ENCODE measurements at regions of chr3 and their contacts with region 1.

Region 1: DNA sequence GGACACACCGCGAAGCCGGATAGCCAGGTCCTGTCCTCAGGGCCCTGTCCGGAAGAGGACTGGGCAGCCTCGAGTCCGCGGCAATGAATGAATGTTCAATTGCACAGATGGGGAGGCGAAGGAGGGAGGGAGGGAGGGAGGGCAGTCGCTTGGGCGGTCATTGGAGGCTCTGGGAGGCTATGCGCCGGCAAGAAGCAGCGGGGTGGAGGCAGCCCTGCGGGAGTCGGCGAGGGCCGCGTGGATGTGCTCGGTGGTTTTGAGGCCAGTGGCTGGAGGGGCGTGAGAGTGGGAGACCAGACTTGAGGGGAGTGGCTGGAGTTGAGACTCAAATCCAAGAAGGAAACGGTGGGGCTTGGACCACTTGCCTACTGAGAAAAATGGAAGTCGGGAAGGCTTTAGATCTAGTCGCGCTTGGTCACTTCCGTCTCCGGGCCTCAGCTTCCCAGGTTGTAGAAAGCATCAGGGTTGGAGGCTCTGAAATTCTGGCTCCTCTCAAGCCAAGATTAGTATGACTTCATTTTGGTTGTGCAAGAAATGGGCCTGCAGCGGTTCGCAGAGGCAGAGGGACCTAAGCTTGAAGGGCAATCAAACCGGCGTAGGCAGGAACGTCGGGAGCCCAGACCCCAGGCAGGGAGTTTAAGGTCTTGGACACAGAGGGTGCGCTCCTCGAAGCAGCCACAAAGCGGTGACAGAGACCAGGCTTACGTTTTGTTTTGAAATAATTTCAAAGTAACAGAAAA is 21.1 kb upstream of the PLXND1 start:
- DNase-seq: peak; percentile 48
- ATAC-seq: peak; percentile 65
- H3K4me3 Mint-ChIP-seq: peak overlapping the region; percentile 93
- H3K27ac Mint-ChIP-seq: peak overlapping the region; percentile 76
- H3K4me1 Mint-ChIP-seq: peaks cover 21% of the 10 kb centered on the region
- H3K27me3 Mint-ChIP-seq: no peaks in the 10 kb centered on the region
- CTCF ChIP-seq: no peak

Region 2: DNA sequence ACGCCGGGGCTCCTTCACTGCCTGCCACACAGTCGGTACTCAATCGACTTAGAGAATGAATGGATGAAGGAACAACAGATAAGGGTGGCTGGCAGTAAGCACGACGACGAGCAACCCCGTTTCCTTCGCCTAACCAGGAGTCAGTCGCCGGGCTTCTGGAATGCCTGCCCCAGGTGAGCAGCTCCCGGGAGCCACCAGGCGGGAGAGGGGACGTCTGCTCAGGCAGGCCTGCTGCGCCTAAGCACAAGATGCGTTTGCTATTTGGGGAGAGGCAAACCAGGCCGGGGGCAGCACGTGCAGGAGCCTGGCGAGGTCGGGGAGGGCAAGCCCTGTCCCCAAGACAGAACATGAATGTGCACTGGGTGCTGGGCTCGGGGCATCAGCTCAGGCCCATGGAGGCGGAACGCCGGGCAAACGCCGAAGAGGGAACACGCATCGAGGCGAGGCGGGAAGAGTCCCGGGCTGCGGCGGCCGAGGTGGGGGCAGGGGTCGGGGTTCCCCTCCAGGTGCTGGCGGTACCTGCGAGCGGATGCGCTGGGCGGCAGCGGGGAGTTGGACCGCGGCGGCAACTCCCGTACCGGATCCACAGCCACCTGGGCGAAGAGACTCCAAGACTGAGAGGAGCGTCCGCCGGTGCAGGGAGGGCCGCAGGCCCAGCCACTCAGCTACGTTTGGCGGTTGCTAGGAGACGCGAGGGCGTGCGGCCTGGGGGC is 634.0 kb before region 1 on chr3 and contains the start of gene CFAP92:
- CTCF ChIA-PET with region 1: no interaction called
- POLR2A ChIA-PET with region 1: no interaction called
- intact Hi-C with region 1: no loop called
- DNase-seq: peak; percentile 88
- ATAC-seq: peak; percentile 98
- H3K4me3 Mint-ChIP-seq: peak within 1 kb of the TSS; percentile 60
- H3K27ac Mint-ChIP-seq: peak within 1 kb of the TSS; percentile 41
- H3K4me1 Mint-ChIP-seq: peaks cover 28% of the 10 kb centered on the region
- H3K27me3 Mint-ChIP-seq: peaks cover 15% of the 10 kb centered on the region
- CTCF ChIP-seq: no peak
- total RNA-seq, gene CFAP92: not detected in 2 replicates

Region 3: DNA sequence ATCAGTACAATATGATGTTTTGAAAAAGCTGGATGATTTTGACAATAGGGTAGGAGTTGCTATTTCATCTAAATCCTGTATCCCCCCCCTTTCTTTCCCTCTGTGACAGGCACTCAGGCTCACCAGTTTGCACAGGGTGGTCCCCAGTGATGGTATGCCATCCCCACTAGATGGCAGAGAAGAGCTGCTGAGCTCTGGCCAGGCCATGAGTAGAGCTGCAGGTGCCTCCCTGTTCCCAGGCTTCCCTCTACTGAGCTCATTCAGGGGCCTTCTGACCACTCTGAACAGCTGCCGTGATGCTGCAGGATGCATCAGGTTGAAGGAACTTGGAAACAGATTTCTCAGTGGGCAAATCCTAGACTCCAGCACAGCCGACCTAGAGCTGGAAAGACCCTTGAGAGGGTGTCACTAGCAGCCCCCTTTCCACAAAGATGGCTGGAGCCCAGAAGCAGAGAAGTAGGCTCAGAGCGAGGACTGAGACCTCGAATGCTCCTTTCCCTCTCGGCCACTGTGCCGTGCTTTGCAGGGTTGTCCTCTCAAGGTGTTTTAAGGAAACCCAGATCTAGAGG is 244.2 kb before region 1 on chr3:
- CTCF ChIA-PET with region 1: interaction called, 6 read pairs
- POLR2A ChIA-PET with region 1: interaction called, 5 read pairs
- intact Hi-C with region 1: loop called (anchors 5 kb)
- DNase-seq: peak; percentile 26
- ATAC-seq: peak; percentile 98
- H3K4me3 Mint-ChIP-seq: no peak overlapping the region
- H3K27ac Mint-ChIP-seq: no peak overlapping the region
- H3K4me1 Mint-ChIP-seq: no peaks in the 10 kb centered on the region
- H3K27me3 Mint-ChIP-seq: no peaks in the 10 kb centered on the region
- CTCF ChIP-seq: peak; percentile 23

Region 4: DNA sequence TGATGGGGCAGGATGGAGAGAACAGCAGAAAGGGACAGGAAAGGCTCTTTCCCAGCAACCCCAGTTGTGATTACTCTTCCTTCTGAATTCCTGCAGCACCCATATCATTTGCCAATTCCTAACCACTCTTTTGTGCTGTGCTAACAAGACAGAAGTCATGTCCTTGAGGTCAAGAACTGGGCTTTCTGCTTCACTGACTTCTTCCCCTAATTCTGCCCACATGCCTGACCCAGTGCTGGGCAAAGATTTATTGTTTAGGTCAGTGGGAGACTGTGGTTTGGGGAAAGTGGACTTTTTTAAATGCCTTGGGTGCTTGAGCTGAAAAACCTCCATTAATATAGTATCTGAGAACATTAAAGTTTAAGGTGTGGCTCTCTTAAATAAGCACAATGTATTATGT is 194.9 kb before region 1 on chr3:
- CTCF ChIA-PET with region 1: no interaction called
- POLR2A ChIA-PET with region 1: no interaction called
- intact Hi-C with region 1: no loop called
- DNase-seq: no peak
- ATAC-seq: no peak
- H3K4me3 Mint-ChIP-seq: no peak overlapping the region
- H3K27ac Mint-ChIP-seq: peak overlapping the region; percentile 59
- H3K4me1 Mint-ChIP-seq: peaks cover 73% of the 10 kb centered on the region
- H3K27me3 Mint-ChIP-seq: no peaks in the 10 kb centered on the region
- CTCF ChIP-seq: no peak

Region 5: DNA sequence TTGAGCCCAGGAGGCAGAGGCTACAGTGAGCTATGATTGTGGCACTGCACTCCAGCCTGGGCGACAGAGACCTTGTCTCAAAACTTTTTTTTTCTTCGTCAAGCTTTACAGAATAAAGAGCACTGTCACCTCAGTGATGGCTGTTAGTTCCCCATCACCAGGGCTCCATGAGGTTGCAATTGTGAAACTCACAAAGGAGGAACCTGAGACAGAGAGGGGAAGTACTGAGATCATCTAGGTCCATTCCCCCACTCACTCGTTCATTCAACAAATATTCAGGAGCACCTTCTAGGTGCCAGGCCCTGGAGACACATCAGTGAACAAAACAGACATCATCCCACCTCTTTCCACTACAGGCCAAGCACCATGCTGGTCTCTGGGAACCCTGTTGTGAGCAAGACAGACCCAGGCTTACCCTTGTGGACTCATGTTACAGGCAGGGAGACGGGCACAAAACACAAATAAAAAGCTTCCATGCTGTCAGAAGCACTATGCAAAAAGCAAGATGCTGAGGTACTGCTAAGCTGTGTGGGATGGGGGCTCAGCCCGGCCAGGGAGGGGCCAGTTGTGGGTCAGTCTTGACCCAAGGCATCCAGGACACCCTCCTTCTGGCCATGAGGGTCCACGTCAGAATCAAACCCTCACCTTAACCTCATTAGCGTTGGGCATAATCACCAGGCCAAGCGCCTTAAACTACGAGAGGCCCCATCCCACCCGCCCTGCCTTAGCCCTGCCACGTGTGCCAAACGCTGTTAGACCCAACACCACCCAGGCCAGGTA is 101.3 kb before region 1 on chr3:
- CTCF ChIA-PET with region 1: no interaction called
- POLR2A ChIA-PET with region 1: no interaction called
- intact Hi-C with region 1: loop called (anchors 1 kb)
- DNase-seq: peak; percentile 36
- ATAC-seq: peak; percentile 100
- H3K4me3 Mint-ChIP-seq: no peak overlapping the region
- H3K27ac Mint-ChIP-seq: peak overlapping the region; percentile 88
- H3K4me1 Mint-ChIP-seq: peaks cover 21% of the 10 kb centered on the region
- H3K27me3 Mint-ChIP-seq: no peaks in the 10 kb centered on the region
- CTCF ChIP-seq: no peak

Region 6: DNA sequence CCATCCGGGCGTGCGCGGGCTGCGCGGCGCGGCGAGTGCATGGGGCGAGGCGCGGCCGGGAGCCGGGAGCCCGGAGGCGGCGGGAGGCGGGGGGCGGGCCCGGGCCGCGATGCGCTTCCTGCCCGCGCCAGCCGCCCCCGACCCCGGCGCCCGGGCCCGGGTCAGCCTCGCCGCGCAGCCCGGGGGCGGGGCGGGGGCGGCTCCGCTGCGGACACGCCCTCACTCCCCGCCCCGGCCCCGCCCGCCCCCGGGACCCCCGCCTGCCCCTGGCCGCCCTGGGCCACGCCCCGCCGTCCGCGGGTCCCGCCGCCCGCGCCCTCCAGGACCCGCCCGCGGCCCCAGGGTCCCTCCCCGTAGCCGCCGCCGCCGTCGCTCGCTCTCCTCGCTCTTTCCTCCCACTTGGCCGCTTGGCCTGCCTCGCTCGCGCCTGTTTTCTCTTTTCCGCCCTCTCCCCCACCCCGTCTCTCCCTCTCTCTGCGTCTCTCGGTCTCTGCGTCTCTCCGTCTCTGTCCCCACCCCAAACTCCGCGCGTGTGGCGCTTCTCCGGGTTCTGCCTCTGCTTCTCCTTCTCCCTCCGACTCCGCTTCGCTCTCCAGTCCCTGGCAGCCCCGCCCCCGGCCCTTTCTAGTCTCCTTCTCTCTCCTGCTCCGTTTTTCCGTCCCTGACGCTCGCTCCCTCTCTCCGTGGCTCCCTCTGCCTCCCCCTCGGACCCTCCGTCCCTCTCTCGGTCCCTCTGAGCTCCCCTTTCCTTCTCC is 20.8 kb before region 1 on chr3 and contains the start of gene PLXND1:
- CTCF ChIA-PET with region 1: no interaction called
- POLR2A ChIA-PET with region 1: interaction called, 4 read pairs
- intact Hi-C with region 1: loop called (anchors 2 kb)
- DNase-seq: peak; percentile 34
- ATAC-seq: peak; percentile 75
- H3K4me3 Mint-ChIP-seq: peak within 1 kb of the TSS; percentile 86
- H3K27ac Mint-ChIP-seq: no peak within 1 kb of the TSS
- H3K4me1 Mint-ChIP-seq: peaks cover 10% of the 10 kb centered on the region
- H3K27me3 Mint-ChIP-seq: peaks cover 24% of the 10 kb centered on the region
- CTCF ChIP-seq: no peak
- total RNA-seq, gene PLXND1: 3.1 and 3.7 TPM in 2 replicates

Region 7: GRCh38 chr3:129663026-129663446 is 35.4 kb after region 1 on chr3:
- CTCF ChIA-PET with region 1: no interaction called
- POLR2A ChIA-PET with region 1: no interaction called
- intact Hi-C with region 1: no loop called
- DNase-seq: no peak
- ATAC-seq: no peak
- H3K4me3 Mint-ChIP-seq: no peak overlapping the region
- H3K27ac Mint-ChIP-seq: no peak overlapping the region
- H3K4me1 Mint-ChIP-seq: peaks cover 9% of the 10 kb centered on the region
- H3K27me3 Mint-ChIP-seq: no peaks in the 10 kb centered on the region
- CTCF ChIP-seq: no peak

Region 8: DNA sequence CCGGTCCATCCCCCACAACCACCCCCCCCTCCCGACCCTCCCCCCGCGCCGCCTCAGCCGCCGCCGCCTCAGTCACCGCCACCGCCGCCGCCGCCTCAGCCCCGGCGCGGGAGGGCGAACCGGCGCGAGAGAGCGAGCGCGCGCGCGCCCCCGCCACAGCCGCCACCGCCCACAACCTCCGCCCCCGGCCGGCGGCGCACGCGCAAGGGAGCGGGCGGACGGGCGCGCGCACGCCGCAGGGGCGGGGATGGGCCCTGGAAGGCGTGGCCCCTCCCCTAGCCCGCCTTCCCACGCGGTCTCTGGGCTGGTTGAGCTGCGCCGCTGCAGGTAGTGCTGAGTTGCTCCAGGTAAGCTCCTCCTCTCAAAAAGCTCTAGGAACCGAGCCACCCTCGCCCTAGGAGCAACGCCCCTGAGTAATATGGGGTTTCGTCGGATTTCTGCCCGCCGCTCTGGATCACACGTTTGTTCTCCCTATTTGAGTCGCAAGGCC is 266.0 kb after region 1 on chr3 and contains the start of gene TMCC1:
- CTCF ChIA-PET with region 1: no interaction called
- POLR2A ChIA-PET with region 1: no interaction called
- intact Hi-C with region 1: loop called (anchors 1 kb)
- DNase-seq: peak; percentile 92
- ATAC-seq: peak; percentile 90
- H3K4me3 Mint-ChIP-seq: peak within 1 kb of the TSS; percentile 87
- H3K27ac Mint-ChIP-seq: peak within 1 kb of the TSS; percentile 88
- H3K4me1 Mint-ChIP-seq: peaks cover 34% of the 10 kb centered on the region
- H3K27me3 Mint-ChIP-seq: no peaks in the 10 kb centered on the region
- CTCF ChIP-seq: no peak
- total RNA-seq, gene TMCC1: 25.8 and 25.9 TPM in 2 replicates

Region 9: GRCh38 chr3:130044370-130044769 is 416.8 kb after region 1 on chr3:
- CTCF ChIA-PET with region 1: no interaction called
- POLR2A ChIA-PET with region 1: no interaction called
- intact Hi-C with region 1: no loop called
- DNase-seq: no peak
- ATAC-seq: no peak
- H3K4me3 Mint-ChIP-seq: no peak overlapping the region
- H3K27ac Mint-ChIP-seq: no peak overlapping the region
- H3K4me1 Mint-ChIP-seq: peaks cover 12% of the 10 kb centered on the region
- H3K27me3 Mint-ChIP-seq: no peaks in the 10 kb centered on the region
- CTCF ChIP-seq: no peak

Region 10: DNA sequence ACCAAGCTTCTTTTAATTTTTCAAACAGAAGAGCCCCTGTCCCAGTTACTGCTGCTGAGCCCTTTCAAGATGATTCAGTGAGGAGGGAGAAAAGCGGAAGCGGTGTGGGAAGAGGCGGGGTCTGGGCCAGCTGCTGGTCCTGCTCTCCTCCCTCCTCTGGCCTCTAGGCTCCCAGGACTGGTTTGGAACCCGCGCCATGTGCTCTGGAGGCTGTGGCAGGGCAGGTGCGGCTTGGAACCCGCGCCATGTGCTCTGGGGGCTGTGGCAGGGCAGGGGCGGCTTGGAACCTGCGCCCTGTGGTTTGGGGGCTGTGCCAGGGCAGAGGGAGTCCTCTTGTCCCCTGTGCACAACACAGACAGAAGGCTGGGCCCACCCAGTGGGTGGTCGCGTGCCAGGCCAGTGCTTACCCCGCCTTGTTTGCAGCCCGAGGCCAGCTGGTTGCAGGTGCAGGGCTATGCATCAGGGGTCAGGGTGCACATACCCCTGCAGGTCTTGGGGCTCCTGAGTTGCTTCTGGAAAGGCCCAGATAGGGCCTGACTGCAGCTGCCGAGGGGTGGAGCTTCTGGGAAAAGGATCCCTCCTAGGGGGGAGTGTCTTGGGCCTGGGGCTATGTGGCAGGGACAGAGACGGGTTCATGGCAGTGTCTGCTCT is 466.3 kb after region 1 on chr3:
- CTCF ChIA-PET with region 1: no interaction called
- POLR2A ChIA-PET with region 1: no interaction called
- intact Hi-C with region 1: loop called (anchors 10 kb)
- DNase-seq: peak; percentile 44
- ATAC-seq: peak; percentile 45
- H3K4me3 Mint-ChIP-seq: peak overlapping the region; percentile 77
- H3K27ac Mint-ChIP-seq: peak overlapping the region; percentile 79
- H3K4me1 Mint-ChIP-seq: peaks cover 37% of the 10 kb centered on the region
- H3K27me3 Mint-ChIP-seq: no peaks in the 10 kb centered on the region
- CTCF ChIP-seq: no peak

Measured in activated B cell treated with CpG ODN at 0.5 μM for 24 hours (primary cell).